OCI-LY7 (cell line): ENCODE measurements at regions of chr2 and their contacts with region 1.

Region 1: DNA sequence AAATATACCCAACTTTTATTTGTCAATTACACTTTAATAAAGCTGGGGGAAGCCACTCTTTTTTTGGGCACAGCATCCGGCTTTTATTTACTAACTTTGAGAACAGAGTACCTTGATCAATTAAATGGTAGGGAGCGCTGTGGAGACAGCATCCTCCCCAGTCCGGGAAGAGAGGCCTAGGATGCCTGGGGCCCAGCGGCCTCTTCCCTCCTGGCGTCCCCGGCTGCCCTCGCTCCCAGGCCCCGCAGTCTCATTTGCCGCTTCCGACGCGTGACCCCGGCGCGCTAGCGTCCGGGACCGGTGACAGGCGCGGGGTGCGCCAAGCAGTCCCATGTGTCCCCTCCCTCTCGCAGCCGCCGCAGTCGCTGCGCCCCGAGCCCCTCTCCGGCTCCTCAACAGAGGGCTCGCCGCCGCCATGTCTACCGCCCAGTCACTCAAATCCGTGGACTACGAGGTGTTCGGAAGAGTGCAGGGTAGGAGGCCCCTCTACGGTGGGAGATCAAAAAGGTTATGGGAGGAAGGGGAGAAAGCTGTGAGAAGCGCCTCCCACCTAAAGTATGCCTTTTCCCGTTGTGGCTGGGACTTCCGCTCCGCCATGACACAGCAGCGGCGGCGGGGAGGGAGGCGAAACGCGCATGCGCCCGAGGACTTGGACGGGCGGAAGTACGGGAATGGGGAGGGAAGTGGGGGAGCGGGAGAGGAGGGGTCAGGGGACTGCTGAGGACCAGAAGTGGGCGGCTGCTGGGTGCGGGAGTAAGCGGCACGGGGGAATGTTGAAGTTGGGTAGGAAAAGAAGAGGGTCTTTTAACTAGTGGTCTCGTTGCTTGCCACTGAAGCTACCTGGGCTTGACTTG is at the start of gene ACYP2:
- DNase-seq: peak; percentile 94
- H3K4me3 ChIP-seq: peak within 1 kb of the TSS; percentile 69
- H3K27ac ChIP-seq: peak within 1 kb of the TSS; percentile 87
- H3K4me1 ChIP-seq: peaks cover 19% of the 10 kb centered on the region
- CTCF ChIP-seq: peak; percentile 64
- total RNA-seq, gene ACYP2: 17.9 and 18.7 TPM in 2 replicates

Region 2: GRCh38 chr2:54099829-54100585 is 15.5 kb before region 1 on chr2:
- CTCF ChIA-PET with region 1: interaction called, 3 read pairs
- POLR2A ChIA-PET with region 1: interaction called, 68 read pairs
- intact Hi-C with region 1: no loop called
- DNase-seq: peak; percentile 97
- H3K4me3 ChIP-seq: peak overlapping the region; percentile 40
- H3K27ac ChIP-seq: peak overlapping the region; percentile 95
- H3K4me1 ChIP-seq: peaks cover 79% of the 10 kb centered on the region
- CTCF ChIP-seq: no peak

Region 3: DNA sequence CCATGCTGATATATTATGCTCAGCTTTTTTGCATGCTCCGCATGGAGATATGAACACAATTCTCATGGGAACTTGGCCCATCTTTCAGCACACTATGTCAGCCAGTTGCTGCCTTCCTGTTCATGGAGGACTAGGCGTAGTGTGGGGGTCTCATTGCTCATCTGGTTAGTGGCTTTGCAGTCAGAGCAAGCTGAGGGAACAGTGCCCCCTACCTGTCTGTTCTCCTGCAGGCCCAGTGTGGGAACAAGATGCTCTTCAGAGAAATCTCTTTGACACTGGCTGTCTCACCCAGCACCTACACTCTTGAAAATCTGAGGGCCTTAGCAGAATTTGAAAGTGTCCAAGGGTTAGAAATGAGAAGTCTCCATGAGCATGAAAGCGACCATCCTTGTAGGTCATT is 387.7 kb after region 1 on chr2:
- CTCF ChIA-PET with region 1: interaction called, 7 read pairs
- POLR2A ChIA-PET with region 1: interaction called, 3 read pairs
- intact Hi-C with region 1: loop called (anchors 2 kb)
- DNase-seq: peak; percentile 75
- H3K4me3 ChIP-seq: no peak overlapping the region
- H3K27ac ChIP-seq: no peak overlapping the region
- H3K4me1 ChIP-seq: peaks cover 12% of the 10 kb centered on the region
- CTCF ChIP-seq: peak; percentile 93

Region 4: DNA sequence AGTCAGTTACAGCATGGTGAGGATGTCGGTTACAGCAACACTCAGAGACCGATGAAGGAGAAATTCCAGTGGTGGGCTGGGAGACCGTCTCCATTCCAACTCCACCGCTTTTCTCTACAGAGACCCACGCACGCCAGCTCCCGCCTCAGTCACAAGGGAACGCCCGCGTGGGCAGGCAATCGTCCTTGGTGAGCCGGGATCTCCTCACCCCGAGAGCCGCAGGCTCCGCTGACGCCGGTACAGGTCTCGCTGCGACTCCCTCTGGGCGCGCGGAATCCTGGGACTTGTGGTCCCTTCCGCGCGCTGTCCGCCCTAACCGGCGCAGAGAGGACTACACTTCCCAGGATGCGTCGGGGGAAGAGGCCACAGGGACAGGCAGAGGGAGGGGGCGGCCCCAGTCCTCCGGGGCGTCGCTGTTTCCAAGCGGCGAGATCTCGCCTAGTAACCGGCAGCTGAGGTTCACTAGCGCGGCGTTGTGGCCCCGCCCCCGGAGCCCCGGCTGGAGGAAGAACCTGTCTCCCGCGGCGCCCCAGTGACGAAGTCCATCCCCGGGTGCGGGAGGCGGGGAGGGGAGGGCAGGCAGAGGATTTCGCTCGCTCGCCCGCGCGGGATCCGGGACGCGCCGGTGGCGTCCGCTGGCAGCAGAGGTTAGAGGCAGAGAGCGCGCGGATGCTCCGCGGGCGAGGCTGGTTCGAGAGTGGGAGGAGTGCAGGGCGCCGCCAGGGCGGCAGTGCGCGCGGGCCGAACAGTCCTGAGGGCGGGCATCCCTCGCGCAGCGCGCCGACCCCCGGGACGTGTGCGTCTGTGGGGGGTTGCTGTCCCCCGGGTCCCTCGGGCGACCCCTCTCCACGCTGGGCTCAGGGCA is 607.9 kb after region 1 on chr2 and contains the start of gene EML6:
- CTCF ChIA-PET with region 1: no interaction called
- POLR2A ChIA-PET with region 1: interaction called, 6 read pairs
- intact Hi-C with region 1: loop called (anchors 5 kb)
- DNase-seq: peak; percentile 99
- H3K4me3 ChIP-seq: peak within 1 kb of the TSS; percentile 79
- H3K27ac ChIP-seq: peak within 1 kb of the TSS; percentile 69
- H3K4me1 ChIP-seq: peaks cover 42% of the 10 kb centered on the region
- CTCF ChIP-seq: peak; percentile 65
- total RNA-seq, gene EML6: 298 and 367 TPM in 2 replicates